ENCODE measurements at regions of chr2 and their contacts with region 1.

Region 1: GRCh38 chr2:73926493-73927338 is at the start of gene DGUOK:
- DNase-seq: peak; percentile 99
- H3K4me3 ChIP-seq: peak within 1 kb of the TSS; percentile 62 to 85 (median 65)
- H3K27ac ChIP-seq: peak within 1 kb of the TSS; percentile 94 to 99 (median 96)
- H3K4me1 ChIP-seq: peaks cover 18 to 46% (median 37%) of the 10 kb centered on the region in 4 donors
- H3K27me3 ChIP-seq: no peaks in the 10 kb centered on the region
- CTCF ChIP-seq: no peak
- EP300 ChIP-seq: peak; percentile 3
- POLR2A ChIP-seq: peak; percentile 99
- total RNA-seq, gene DGUOK: 27.3 to 49.7 (median 40.3) TPM

Region 2: GRCh38 chr2:72325592-72326422 is 1600.9 kb before region 1 on chr2:
- in situ Hi-C with region 1: no loop called
- intact Hi-C with region 1: no loop called
- DNase-seq: peak; percentile 57
- H3K4me3 ChIP-seq: no peak overlapping the region
- H3K27ac ChIP-seq: no peak overlapping the region
- H3K4me1 ChIP-seq: no peaks in the 10 kb centered on the region
- H3K27me3 ChIP-seq: no peaks in the 10 kb centered on the region
- CTCF ChIP-seq: peak; percentile 50 to 70 (median 65)
- EP300 ChIP-seq: no peak
- POLR2A ChIP-seq: no peak

Region 3: GRCh38 chr2:72399879-72400278 is 1526.8 kb before region 1 on chr2:
- in situ Hi-C with region 1: no loop called
- intact Hi-C with region 1: no loop called
- DNase-seq: no peak
- H3K4me3 ChIP-seq: no peak overlapping the region
- H3K27ac ChIP-seq: no peak overlapping the region
- H3K4me1 ChIP-seq: peaks cover 0 to 4% (median 0%) of the 10 kb centered on the region in 4 donors
- H3K27me3 ChIP-seq: no peaks in the 10 kb centered on the region
- CTCF ChIP-seq: no peak
- EP300 ChIP-seq: no peak
- POLR2A ChIP-seq: no peak

Region 4: DNA sequence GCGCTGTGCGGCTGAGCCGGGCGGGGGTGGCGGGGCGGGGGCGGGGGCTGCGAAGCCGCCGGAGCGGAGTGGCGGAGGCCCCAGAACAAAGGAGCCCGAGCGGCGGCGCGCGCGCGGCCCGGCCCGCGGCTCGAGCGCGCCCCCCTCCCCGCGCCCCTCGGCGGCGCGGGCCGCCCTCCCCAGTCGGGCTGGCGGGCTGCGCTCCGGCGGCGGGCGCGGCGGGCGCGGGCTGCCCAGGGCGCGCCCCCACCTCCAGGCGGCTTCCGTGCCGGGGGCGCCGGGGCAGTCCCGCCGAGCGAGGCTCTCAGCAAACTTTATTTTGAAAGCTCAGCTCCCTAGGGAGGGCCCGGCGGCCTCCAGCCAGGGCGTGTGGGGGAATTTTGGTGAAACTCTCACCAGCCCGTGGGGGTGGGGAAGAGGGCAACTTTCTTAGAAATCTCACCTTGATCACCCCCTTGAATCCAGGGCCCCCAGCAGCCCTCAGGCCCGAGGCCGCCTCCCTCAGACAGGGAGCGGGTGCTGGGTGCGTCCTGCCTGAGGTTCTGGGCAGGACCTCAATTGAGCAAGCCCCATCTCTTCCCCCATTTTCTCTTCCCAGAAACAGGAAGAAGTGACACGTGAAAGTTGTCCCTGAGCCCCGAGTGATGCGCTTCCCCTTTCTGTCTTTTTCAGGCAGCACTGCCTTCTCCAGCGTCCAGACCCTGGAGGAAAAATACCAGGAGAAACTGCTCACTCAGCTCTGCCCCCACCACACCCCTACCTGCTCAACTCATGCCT is 58.8 kb after region 1 on chr2:
- in situ Hi-C with region 1: no loop called
- intact Hi-C with region 1: loop called (anchors 10 kb)
- DNase-seq: peak; percentile 40
- H3K4me3 ChIP-seq: peak overlapping the region; percentile 10 to 73 (median 65)
- H3K27ac ChIP-seq: peak overlapping the region; percentile 89 to 96 (median 92)
- H3K4me1 ChIP-seq: peaks cover 27 to 77% (median 68%) of the 10 kb centered on the region in 4 donors
- H3K27me3 ChIP-seq: no peaks in the 10 kb centered on the region
- CTCF ChIP-seq: no peak
- EP300 ChIP-seq: no peak
- POLR2A ChIP-seq: peak; percentile 38